ENCODE measurements at regions of chrX and their contacts with region 1.

Region 1: GRCh38 chrX:48574270-48575266 is at the start of gene RBM3:
- DNase-seq: peak; percentile 80 to 97 (median 91)
- ATAC-seq: peak; percentile 91
- H3K4me3 ChIP-seq: peak within 1 kb of the TSS; percentile 70 to 97
- H3K4me3 Mint-ChIP-seq: peak within 1 kb of the TSS; percentile 97
- H3K27ac ChIP-seq: peak within 1 kb of the TSS; percentile 100
- H3K27ac Mint-ChIP-seq: peak within 1 kb of the TSS; percentile 99
- H3K4me1 ChIP-seq: peaks cover 24% of the 10 kb centered on the region
- H3K4me1 Mint-ChIP-seq: peaks cover 25% of the 10 kb centered on the region
- H3K27me3 ChIP-seq: no peaks in the 10 kb centered on the region
- H3K27me3 Mint-ChIP-seq: no peaks in the 10 kb centered on the region
- CTCF ChIP-seq: peak; percentile 21
- total RNA-seq, gene RBM3: 442 to 444 TPM

Region 2: GRCh38 chrX:48521353-48522243 is 53.0 kb before region 1 on chrX and contains the start of gene EBP:
- CTCF ChIA-PET with region 1: no interaction called
- POLR2A ChIA-PET with region 1: interaction called, 4 read pairs
- intact Hi-C with region 1: loop called in 1 of 2 experiments (anchors 1 kb)
- DNase-seq: peak; percentile 85 to 96 (median 92)
- ATAC-seq: peak; percentile 96
- H3K4me3 ChIP-seq: peak within 1 kb of the TSS; percentile 72 to 83
- H3K4me3 Mint-ChIP-seq: peak within 1 kb of the TSS; percentile 87
- H3K27ac ChIP-seq: peak within 1 kb of the TSS; percentile 80 to 90
- H3K27ac Mint-ChIP-seq: peak within 1 kb of the TSS; percentile 95
- H3K4me1 ChIP-seq: peaks cover 19% of the 10 kb centered on the region
- H3K4me1 Mint-ChIP-seq: peaks cover 38% of the 10 kb centered on the region
- H3K27me3 ChIP-seq: no peaks in the 10 kb centered on the region
- H3K27me3 Mint-ChIP-seq: no peaks in the 10 kb centered on the region
- CTCF ChIP-seq: no peak
- total RNA-seq, gene EBP: 55.2 to 56.9 TPM

Region 3: DNA sequence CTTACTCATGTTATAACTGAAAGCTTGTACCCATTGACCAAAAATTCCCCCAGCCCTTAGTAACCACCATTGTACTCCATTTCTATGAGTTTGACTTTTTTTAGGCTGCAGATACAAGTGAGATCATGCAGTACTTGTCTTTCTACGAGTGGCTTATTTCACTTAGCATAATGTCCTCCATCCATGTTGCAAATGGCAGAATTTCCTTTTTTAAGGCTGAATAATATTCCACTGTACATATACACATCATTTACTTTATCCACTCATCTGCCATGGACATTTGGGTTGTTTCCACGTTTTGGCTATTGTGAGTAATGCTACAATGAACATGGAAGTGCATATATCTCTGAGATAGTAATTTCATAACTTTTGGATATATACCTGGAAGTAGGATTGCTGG is 10.1 kb after region 1 on chrX:
- CTCF ChIA-PET with region 1: no interaction called
- POLR2A ChIA-PET with region 1: interaction called, 12 read pairs
- intact Hi-C with region 1: no loop called
- DNase-seq: no peak
- ATAC-seq: no peak
- H3K4me3 ChIP-seq: no peak overlapping the region
- H3K4me3 Mint-ChIP-seq: no peak overlapping the region
- H3K27ac ChIP-seq: no peak overlapping the region
- H3K27ac Mint-ChIP-seq: no peak overlapping the region
- H3K4me1 ChIP-seq: no peaks in the 10 kb centered on the region
- H3K4me1 Mint-ChIP-seq: peaks cover 4% of the 10 kb centered on the region
- H3K27me3 ChIP-seq: no peaks in the 10 kb centered on the region
- H3K27me3 Mint-ChIP-seq: no peaks in the 10 kb centered on the region
- CTCF ChIP-seq: no peak

Region 4: DNA sequence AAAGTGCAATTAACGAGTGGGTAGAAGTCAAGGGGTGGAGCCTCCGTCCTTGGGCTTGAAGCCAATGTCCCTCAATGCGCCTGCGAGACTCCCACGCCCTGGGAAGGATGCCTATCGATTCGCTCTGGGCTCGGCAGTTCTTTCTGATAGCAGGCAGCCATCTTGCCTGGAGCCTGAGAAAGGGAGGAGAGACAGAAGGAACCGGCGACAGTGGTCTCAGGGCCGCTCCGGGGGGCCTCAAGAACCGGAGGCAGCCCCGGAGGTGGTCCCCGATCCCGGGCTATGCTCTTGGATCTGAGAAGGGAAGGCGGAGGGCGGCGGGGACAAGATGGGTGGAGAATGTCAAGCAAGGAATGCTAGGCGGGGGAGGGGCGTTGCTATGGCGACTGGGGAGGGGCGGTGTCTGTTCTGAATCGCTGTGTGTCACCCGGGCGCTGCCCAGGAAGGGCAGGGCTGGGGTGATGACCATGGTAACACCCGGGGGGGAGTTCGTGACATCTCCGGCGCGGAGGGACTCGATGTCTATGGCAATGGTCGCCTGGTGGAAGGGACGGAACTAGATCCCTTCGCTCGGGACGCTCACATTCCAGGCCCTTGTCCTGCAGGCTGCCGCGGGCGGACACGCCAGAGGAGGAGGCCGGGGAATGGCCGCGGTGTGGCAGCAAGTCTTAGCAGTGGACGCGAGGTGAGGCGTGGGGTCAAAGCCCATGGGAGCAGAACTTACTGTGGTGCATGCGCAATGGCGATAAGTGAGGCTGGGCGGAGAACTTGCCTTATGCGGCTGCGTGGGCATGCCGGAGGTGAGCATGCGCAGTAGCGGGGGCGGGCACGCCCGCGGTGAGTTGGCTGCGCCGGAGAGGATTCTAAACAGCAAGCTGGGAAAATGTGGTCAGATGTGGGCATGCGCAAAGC is 23.0 kb after region 1 on chrX and contains the start of gene WDR13:
- CTCF ChIA-PET with region 1: no interaction called
- POLR2A ChIA-PET with region 1: interaction called, 6 read pairs
- intact Hi-C with region 1: loop called (anchors 1 kb)
- DNase-seq: peak; percentile 79 to 94 (median 90)
- ATAC-seq: peak; percentile 82
- H3K4me3 ChIP-seq: peak within 1 kb of the TSS; percentile 90 to 99
- H3K4me3 Mint-ChIP-seq: peak within 1 kb of the TSS; percentile 94
- H3K27ac ChIP-seq: peak within 1 kb of the TSS; percentile 100
- H3K27ac Mint-ChIP-seq: peak within 1 kb of the TSS; percentile 100
- H3K4me1 ChIP-seq: peaks cover 7% of the 10 kb centered on the region
- H3K4me1 Mint-ChIP-seq: peaks cover 10% of the 10 kb centered on the region
- H3K27me3 ChIP-seq: no peaks in the 10 kb centered on the region
- H3K27me3 Mint-ChIP-seq: no peaks in the 10 kb centered on the region
- CTCF ChIP-seq: no peak
- total RNA-seq, gene WDR13: 41.6 to 51.6 TPM